ENCODE measurements at regions of chr11 and their contacts with region 1.

Region 1: GRCh38 chr11:47248664-47249377 is at the start of gene ACP2:
- DNase-seq: peak; percentile 88
- CTCF ChIP-seq: peak; percentile 58

Region 2: DNA sequence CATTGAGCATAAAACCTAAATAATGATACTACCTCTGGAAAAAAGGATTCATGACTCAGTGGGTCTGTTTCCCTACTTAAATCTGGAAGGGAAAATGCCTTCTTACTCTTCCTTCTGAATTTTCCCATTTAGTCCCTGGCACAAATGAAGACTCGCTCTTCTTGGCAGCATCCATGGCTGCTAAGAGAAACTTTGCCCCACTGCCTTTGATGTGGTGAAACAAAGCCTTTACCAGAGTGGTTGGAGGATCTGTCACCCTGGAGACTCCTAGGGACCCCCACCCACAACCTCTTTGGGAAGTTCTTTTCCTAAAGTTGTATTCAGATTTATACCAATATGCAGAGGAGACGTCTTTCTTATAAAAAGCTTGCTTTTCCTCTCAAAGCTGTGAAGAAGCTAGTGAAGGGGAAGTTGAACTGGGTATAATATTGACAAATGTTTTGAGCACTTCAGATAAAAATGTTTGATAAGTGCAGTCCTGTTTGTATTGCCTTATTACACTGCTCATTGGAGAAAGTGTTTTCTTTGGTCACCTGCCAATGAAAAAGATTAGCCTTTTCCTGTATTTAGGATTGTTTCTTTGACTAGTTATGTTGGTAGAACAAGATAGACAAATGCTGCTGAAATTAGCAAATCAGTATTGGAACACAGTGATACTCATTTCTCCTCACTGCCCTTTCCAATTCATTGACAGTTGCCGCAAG is 149.5 kb before region 1 on chr11:
- CTCF ChIA-PET with region 1: no interaction called
- POLR2A ChIA-PET with region 1: no interaction called
- DNase-seq: no peak
- CTCF ChIP-seq: no peak

Region 3: GRCh38 chr11:47233989-47234668 is 14.7 kb before region 1 on chr11:
- CTCF ChIA-PET with region 1: interaction called, 22 read pairs
- POLR2A ChIA-PET with region 1: interaction called, 7 read pairs
- DNase-seq: no peak
- CTCF ChIP-seq: no peak

Region 4: GRCh38 chr11:47269002-47269828 is 20.4 kb after region 1 on chr11:
- CTCF ChIA-PET with region 1: interaction called, 13 read pairs
- POLR2A ChIA-PET with region 1: interaction called, 3 read pairs
- DNase-seq: peak; percentile 93
- CTCF ChIP-seq: no peak

Region 5: GRCh38 chr11:47407746-47408590 is 159.1 kb after region 1 on chr11 and contains the start of gene SLC39A13:
- CTCF ChIA-PET with region 1: interaction called, 22 read pairs
- POLR2A ChIA-PET with region 1: no interaction called
- DNase-seq: peak; percentile 97
- CTCF ChIP-seq: peak; percentile 98